Activated naive CD4-positive, alpha-beta T cell treated with anti-CD3 and anti-CD28 coated beads, Interleukin-2, amount 10 ng/mL, durations not matched to agents 7 days and 5 days (primary cell): ENCODE measurements at regions of chr7 and their contacts with region 1.

Region 1: GRCh38 chr7:909358-910329 is 33.3 kb downstream of the GET4 start:
- DNase-seq: peak; percentile 35
- H3K4me3 Mint-ChIP-seq: no peak overlapping the region
- H3K27ac Mint-ChIP-seq: no peak overlapping the region
- H3K4me1 Mint-ChIP-seq: peaks cover 11% of the 10 kb centered on the region
- H3K27me3 Mint-ChIP-seq: peaks cover 43% of the 10 kb centered on the region

Region 2: DNA sequence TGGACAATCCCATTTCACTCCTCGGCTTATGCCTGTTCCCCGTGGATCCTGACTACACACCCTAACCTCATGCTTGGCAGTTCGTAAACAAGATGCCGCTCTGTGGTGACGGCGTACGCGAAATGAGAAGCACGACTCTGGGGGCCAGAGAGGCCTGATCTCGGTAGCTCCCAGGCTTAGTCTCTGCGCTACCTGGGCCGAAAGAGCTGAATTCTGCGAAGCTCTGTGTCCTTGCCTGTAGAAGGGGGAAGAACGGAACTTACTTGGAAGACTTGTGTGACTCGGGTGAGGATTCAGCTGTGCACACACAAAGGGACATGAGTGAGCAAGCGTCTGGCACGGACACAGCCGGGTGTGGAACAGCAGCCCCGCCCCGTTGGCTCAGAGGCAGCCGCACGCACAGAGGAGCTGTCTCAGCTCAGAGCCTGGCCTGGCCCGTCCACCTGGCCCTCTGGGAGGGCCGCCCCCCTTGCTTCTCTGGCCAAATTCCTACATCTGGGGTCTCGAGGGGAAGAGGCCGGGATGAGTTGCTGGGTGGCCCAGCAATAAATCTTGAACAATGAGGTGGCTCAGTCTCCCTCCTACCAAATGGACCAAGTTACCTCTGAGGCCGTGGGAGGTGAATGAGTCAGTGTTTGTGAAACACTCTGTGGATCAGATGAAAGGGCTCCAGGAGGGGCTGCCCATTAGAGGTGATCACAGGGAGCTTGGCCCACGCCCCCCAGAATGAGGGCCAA is 473.8 kb before region 1 on chr7:
- CTCF ChIA-PET with region 1: no interaction called
- DNase-seq: no peak
- H3K4me3 Mint-ChIP-seq: no peak overlapping the region
- H3K27ac Mint-ChIP-seq: peak overlapping the region; percentile 33
- H3K4me1 Mint-ChIP-seq: peaks cover 4% of the 10 kb centered on the region
- H3K27me3 Mint-ChIP-seq: no peaks in the 10 kb centered on the region

Region 3: GRCh38 chr7:922334-923107 is 12.9 kb after region 1 on chr7:
- CTCF ChIA-PET with region 1: interaction called, 10 read pairs
- DNase-seq: peak; percentile 55
- H3K4me3 Mint-ChIP-seq: peak overlapping the region; percentile 85
- H3K27ac Mint-ChIP-seq: peak overlapping the region; percentile 93
- H3K4me1 Mint-ChIP-seq: peaks cover 30% of the 10 kb centered on the region
- H3K27me3 Mint-ChIP-seq: peaks cover 14% of the 10 kb centered on the region

Region 4: DNA sequence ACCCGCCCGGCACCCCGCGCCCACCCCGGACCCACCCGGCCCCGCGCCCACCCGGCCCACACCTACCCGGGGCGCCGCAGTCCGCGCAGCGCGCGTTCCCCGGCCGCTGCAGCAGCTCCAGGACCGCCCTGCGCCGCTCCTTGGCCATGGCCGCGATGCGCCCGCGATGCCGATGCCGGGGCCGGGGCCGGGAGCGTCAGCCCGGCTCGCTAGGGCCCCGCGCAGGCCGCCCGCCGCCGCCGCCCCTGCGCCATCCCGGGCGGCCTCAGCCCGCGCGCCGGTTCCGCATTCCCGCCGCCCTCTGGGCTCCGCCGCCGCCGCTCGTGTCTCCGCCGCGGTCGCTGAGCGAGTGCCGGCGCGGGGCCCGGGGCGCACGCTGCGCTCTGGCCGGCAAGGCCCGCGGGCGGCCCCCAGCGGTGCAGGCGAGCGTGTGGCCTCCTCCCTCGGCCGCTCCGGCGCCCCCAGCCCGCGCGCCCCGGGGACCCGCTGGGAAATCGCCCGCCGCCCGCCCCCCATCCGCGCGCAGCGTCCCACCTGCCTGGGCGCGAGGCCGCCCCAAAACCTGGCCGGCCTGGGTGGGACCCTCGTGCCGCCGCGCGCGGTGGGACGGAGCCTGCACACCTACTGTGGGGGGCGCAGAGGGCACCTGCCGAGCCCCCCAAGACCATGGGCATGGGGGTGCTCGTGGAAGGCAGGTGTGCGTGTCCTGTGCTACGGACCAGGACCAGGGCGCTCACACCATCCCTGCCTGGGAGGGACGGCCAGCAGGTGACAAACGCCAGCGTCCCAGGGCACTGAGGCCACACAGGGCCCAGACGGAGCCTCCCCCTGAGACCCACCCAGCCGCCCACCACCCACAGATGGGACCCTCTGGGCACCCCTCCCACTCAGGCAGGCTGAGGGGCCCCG is 44.9 kb after region 1 on chr7 and contains the start of gene ADAP1:
- CTCF ChIA-PET with region 1: interaction called, 47 read pairs
- DNase-seq: peak; percentile 61
- H3K4me3 Mint-ChIP-seq: peak within 1 kb of the TSS; percentile 62
- H3K27ac Mint-ChIP-seq: no peak within 1 kb of the TSS
- H3K4me1 Mint-ChIP-seq: peaks cover 3% of the 10 kb centered on the region
- H3K27me3 Mint-ChIP-seq: peaks cover 63% of the 10 kb centered on the region